ENCODE measurements at regions of chr1 and their contacts with region 1.

Region 1: GRCh38 chr1:229148041-229148671 is 122.8 kb upstream of the RAB4A start:
- DNase-seq: peak; percentile 94
- ATAC-seq: peak; percentile 98
- H3K4me3 ChIP-seq: peak overlapping the region in 1 of 3 experiments; percentile 42; a peak in 2 of 6 replicates
- H3K27ac ChIP-seq: peak overlapping the region; percentile 87
- H3K4me1 ChIP-seq: peaks cover 40% of the 10 kb centered on the region
- H3K27me3 ChIP-seq: no peaks in the 10 kb centered on the region
- CTCF ChIP-seq: peak; percentile 65
- EP300 ChIP-seq: peak; percentile 47 to 85; a peak in 3 of 4 replicates
- POLR2A ChIP-seq: peak in 1 of 2 experiments; percentile 53; a peak in 2 of 4 replicates
- RAD21 ChIP-seq: peak; percentile 66

Region 2: DNA sequence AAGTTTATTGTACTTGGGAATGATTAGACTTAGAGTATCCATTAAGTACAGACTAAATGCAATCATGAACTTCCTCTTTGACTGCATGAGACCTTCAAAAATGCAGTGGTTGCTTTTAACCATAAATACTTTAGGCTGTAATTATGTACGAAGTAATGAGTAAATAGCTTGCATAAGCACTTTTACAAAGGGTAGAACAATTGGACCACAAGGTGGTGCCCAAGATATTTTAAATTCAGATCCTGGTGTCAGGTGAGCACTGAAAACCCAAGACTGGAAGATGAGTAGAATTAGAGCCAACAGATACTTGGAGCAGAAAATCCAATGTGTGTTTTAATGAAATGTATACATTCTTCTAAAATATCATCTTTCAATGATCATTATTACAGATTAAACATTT is 456.2 kb before region 1 on chr1:
- CTCF ChIA-PET with region 1: no interaction called
- POLR2A ChIA-PET with region 1: no interaction called
- in situ Hi-C with region 1: loop called (anchors 10 kb)
- intact Hi-C with region 1: loop called (anchors 2 kb)
- DNase-seq: peak; percentile 72
- ATAC-seq: 0 out of 3 replicates have a peak, but pooled peaks have one; percentile 40
- H3K4me3 ChIP-seq: no peak overlapping the region
- H3K27ac ChIP-seq: no peak overlapping the region
- H3K4me1 ChIP-seq: peaks cover 17% of the 10 kb centered on the region; the same call in 1 of the 2 replicates
- H3K27me3 ChIP-seq: no peaks in the 10 kb centered on the region; a peak in 1 of 5 replicates
- CTCF ChIP-seq: peak; percentile 60
- EP300 ChIP-seq: no peak
- POLR2A ChIP-seq: no peak
- RAD21 ChIP-seq: peak; percentile 53

Region 3: GRCh38 chr1:228998179-228998578 is 150.0 kb before region 1 on chr1:
- CTCF ChIA-PET with region 1: no interaction called
- POLR2A ChIA-PET with region 1: no interaction called
- in situ Hi-C with region 1: no loop called
- intact Hi-C with region 1: loop called (anchors 5 kb)
- DNase-seq: no peak
- ATAC-seq: no peak; the same call in 1 of the 3 replicates
- H3K4me3 ChIP-seq: no peak overlapping the region
- H3K27ac ChIP-seq: peak overlapping the region; percentile 48
- H3K4me1 ChIP-seq: peaks cover 60% of the 10 kb centered on the region
- H3K27me3 ChIP-seq: no peaks in the 10 kb centered on the region
- CTCF ChIP-seq: no peak
- EP300 ChIP-seq: no peak
- POLR2A ChIP-seq: no peak
- RAD21 ChIP-seq: no peak

Region 4: DNA sequence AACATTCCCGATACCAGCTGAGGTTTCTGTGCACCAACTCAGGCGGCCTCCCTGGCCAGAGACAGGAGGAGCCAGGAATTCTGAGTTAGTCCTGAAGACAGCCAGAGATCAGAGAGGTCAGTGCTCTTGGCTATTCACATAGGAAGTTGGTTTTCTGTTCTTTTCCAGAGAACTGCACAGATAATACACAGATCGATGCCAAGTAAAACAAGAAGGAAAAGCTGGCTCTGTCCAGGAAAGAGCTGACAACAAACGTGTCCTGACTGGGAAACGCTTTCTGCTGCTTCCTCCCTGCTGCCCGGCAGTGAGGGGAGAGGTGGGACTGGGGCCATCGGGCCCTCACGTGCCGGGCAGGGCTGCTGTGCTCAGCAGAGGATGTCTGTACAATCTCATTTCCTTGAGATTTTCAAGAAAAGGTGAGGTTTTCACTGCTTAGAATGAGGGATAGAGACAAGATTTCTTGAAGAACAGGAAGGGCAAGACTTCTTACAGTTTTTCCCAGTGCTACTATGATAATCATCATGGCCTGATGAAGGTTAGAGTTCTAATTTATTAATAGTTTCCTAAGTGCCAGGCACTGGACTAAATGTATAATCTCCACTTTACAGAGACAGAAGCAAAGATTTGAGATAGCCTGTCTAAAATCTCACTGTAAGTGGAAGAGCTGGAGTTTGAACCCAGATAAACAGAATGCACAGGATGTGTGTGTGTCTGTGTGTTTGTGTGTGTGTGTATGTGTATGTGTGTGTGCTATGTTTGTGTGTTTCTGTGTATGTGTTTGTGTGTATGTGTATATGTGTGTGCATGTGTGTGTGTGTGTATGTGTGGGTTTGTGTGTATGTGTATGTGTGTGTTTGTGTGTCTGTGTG is 88.3 kb before region 1 on chr1:
- CTCF ChIA-PET with region 1: no interaction called
- POLR2A ChIA-PET with region 1: no interaction called
- in situ Hi-C with region 1: no loop called
- intact Hi-C with region 1: loop called (anchors 1 kb)
- DNase-seq: no peak
- ATAC-seq: peak; percentile 28
- H3K4me3 ChIP-seq: no peak overlapping the region
- H3K27ac ChIP-seq: peak overlapping the region; percentile 4
- H3K4me1 ChIP-seq: peaks cover 73% of the 10 kb centered on the region
- H3K27me3 ChIP-seq: no peaks in the 10 kb centered on the region
- CTCF ChIP-seq: no peak
- EP300 ChIP-seq: no peak
- POLR2A ChIP-seq: no peak
- RAD21 ChIP-seq: no peak

Measured in HepG2 (cell line).